AG04449 (cell line): ENCODE measurements at regions of chr17 and their contacts with region 1.

Region 1: DNA sequence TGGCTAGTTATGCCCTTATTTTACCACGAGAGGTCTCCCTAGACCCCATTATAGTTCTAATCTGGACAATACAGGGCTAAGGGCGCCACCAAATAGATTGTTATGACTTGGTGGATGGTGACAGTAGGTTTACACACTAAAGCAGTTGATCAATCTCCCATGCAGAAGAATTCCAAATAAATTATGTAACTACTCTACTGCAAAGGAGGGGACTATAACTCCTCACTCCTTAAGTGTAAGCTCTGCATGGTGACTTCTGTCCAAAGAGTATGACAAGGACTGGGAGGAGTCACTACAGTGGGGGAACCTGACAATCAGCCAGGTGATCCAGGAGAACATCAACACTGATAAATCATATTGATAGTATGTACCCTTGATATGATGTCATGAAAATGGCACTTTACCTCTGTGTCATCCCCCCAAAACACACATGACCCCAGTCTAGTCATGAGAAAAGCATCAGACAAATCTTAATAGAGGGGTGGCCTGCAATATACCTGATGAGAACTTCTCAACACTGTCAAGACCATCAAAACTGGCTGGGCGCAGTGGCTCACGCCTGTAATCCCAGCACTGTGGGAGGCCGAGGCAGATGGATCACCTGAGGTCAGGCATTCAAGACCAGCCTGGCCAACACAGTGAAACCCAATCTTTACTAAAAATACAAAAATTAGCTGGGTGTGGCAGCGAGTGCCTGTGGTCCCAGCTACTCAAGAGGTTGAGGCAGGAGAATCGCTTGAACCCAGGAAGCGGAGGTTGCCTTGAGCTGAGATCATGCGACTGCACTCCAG is 20.1 kb upstream of the YPEL2 start:
- DNase-seq: peak; percentile 5
- H3K4me3 ChIP-seq: no peak overlapping the region
- CTCF ChIP-seq: no peak

Region 2: GRCh38 chr17:59427425-59427921 is 116.1 kb after region 1 on chr17:
- CTCF ChIA-PET with region 1: interaction called, 403 read pairs
- POLR2A ChIA-PET with region 1: no interaction called
- DNase-seq: no peak
- H3K4me3 ChIP-seq: no peak overlapping the region
- CTCF ChIP-seq: no peak

Region 3: GRCh38 chr17:59565171-59565969 is 254.0 kb after region 1 on chr17 and contains the start of gene DHX40:
- CTCF ChIA-PET with region 1: interaction called, 45 read pairs
- POLR2A ChIA-PET with region 1: no interaction called
- DNase-seq: peak; percentile 74
- H3K4me3 ChIP-seq: peak within 1 kb of the TSS; percentile 100
- CTCF ChIP-seq: no peak